Transverse colon (tissue), 4 donors: ENCODE measurements at regions of chr12 and their contacts with region 1.

Region 1: DNA sequence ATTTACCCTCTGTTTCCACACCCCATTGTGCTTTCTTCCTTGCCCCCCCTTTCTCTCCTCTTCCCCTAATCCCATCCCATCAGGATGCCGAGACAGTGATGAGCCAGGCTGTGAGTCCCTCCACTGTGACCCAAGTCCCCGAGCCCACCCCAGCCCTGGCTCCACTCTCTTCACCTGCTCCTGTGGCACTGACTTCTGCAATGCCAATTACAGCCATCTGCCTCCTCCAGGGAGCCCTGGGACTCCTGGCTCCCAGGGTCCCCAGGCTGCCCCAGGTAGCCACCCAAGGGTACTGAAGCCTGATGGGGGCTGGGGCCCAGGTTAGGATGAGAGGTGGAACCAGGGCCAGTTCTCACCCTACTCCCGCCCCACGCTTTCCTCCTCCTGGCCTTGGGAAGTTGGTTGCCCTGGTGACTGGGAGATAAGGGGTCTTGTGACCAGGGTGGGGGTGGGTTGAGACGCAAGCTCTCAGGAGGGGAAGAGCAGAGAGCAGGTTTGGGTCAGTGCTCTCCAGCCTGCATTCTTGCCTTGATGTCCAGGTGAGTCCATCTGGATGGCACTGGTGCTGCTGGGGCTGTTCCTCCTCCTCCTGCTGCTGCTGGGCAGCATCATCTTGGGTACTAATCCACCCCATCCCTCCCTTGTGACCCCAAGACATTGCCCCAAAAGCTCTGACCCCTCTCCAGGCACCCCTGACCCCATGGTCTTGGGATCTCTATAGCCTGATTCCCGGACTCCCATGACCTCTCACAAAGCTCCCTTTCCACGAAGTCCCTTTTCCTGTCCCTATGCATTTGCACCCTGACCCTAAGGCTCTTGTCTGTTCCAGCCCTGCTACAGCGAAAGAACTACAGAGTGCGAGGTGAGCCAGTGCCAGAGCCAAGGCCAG is 1.2 kb downstream of the AMHR2 start:
- DNase-seq: no peak
- H3K4me3 ChIP-seq: no peak overlapping the region
- H3K27ac ChIP-seq: no peak overlapping the region
- H3K4me1 ChIP-seq: peaks cover 6 to 9% (median 7%) of the 10 kb centered on the region in 4 donors
- H3K27me3 ChIP-seq: no peaks in the 10 kb centered on the region
- CTCF ChIP-seq: no peak
- EP300 ChIP-seq: no peak
- POLR2A ChIP-seq: no peak

Region 2: GRCh38 chr12:53352331-53353256 is 72.3 kb before region 1 on chr12:
- in situ Hi-C with region 1: loop called in 2 of 4 experiments (anchors 5 kb)
- intact Hi-C with region 1: loop called (anchors 1 kb)
- DNase-seq: peak; percentile 90
- H3K4me3 ChIP-seq: no peak overlapping the region
- H3K27ac ChIP-seq: peak overlapping the region; percentile 58 to 79 (median 68)
- H3K4me1 ChIP-seq: peaks cover 0 to 14% (median 10%) of the 10 kb centered on the region in 4 donors
- H3K27me3 ChIP-seq: no peaks in the 10 kb centered on the region
- CTCF ChIP-seq: peak; percentile 83 to 96 (median 89)
- EP300 ChIP-seq: no peak
- POLR2A ChIP-seq: no peak

Region 3: DNA sequence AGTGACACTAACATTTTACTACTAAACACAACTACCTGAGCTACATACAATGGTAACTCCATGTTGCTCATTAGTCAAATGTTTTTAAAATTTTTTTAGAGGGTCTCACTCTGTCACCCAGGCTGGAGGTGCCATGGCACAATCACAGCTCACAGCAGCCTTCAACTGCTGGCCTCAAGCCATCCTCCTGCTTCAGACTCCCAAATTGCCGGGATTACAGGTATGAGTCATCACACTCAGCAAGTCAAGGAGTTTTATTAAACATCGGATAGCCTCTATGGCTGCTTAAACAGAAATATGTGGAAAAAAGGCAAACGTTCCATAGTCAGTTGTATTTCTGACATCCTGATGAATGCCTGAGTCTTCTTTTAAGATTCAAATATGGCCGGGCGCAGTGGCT is 93.5 kb after region 1 on chr12:
- in situ Hi-C with region 1: no loop called
- intact Hi-C with region 1: no loop called
- DNase-seq: no peak
- H3K4me3 ChIP-seq: no peak overlapping the region
- H3K27ac ChIP-seq: no peak overlapping the region
- H3K4me1 ChIP-seq: no peaks in the 10 kb centered on the region
- H3K27me3 ChIP-seq: no peaks in the 10 kb centered on the region
- CTCF ChIP-seq: no peak
- EP300 ChIP-seq: no peak
- POLR2A ChIP-seq: no peak

Region 4: GRCh38 chr12:53645165-53645564 is 220.3 kb after region 1 on chr12:
- in situ Hi-C with region 1: no loop called
- intact Hi-C with region 1: no loop called
- DNase-seq: no peak
- H3K4me3 ChIP-seq: no peak overlapping the region
- H3K27ac ChIP-seq: no peak overlapping the region
- H3K4me1 ChIP-seq: no peaks in the 10 kb centered on the region
- H3K27me3 ChIP-seq: no peaks in the 10 kb centered on the region
- CTCF ChIP-seq: no peak
- EP300 ChIP-seq: no peak
- POLR2A ChIP-seq: no peak